CD4-positive, alpha-beta memory T cell (primary cell): ENCODE measurements at regions of chr15 and their contacts with region 1.

Region 1: GRCh38 chr15:42704492-42704926 is 32.4 kb downstream of the CDAN1 start:
- DNase-seq: peak; percentile 54 to 60 (median 55)
- H3K4me3 ChIP-seq: no peak overlapping the region
- H3K4me3 Mint-ChIP-seq: no peak overlapping the region
- H3K27ac ChIP-seq: no peak overlapping the region
- H3K27ac Mint-ChIP-seq: no peak overlapping the region
- H3K4me1 ChIP-seq: no peaks in the 10 kb centered on the region
- H3K4me1 Mint-ChIP-seq: peaks cover 0 to 5% (median 0%) of the 10 kb centered on the region in 4 donors
- H3K27me3 ChIP-seq: no peaks in the 10 kb centered on the region
- H3K27me3 Mint-ChIP-seq: no peaks in the 10 kb centered on the region

Region 2: GRCh38 chr15:42929306-42929848 is 224.9 kb after region 1 on chr15:
- CTCF ChIA-PET with region 1: interaction called, 80 read pairs
- POLR2A ChIA-PET with region 1: interaction called, 3 read pairs
- intact Hi-C with region 1: loop called (anchors 1 kb)
- DNase-seq: no peak
- H3K4me3 ChIP-seq: no peak overlapping the region
- H3K4me3 Mint-ChIP-seq: no peak overlapping the region
- H3K27ac ChIP-seq: no peak overlapping the region
- H3K27ac Mint-ChIP-seq: no peak overlapping the region
- H3K4me1 ChIP-seq: no peaks in the 10 kb centered on the region
- H3K4me1 Mint-ChIP-seq: peaks cover 0 to 2% (median 0%) of the 10 kb centered on the region in 4 donors
- H3K27me3 ChIP-seq: no peaks in the 10 kb centered on the region
- H3K27me3 Mint-ChIP-seq: no peaks in the 10 kb centered on the region

Region 3: DNA sequence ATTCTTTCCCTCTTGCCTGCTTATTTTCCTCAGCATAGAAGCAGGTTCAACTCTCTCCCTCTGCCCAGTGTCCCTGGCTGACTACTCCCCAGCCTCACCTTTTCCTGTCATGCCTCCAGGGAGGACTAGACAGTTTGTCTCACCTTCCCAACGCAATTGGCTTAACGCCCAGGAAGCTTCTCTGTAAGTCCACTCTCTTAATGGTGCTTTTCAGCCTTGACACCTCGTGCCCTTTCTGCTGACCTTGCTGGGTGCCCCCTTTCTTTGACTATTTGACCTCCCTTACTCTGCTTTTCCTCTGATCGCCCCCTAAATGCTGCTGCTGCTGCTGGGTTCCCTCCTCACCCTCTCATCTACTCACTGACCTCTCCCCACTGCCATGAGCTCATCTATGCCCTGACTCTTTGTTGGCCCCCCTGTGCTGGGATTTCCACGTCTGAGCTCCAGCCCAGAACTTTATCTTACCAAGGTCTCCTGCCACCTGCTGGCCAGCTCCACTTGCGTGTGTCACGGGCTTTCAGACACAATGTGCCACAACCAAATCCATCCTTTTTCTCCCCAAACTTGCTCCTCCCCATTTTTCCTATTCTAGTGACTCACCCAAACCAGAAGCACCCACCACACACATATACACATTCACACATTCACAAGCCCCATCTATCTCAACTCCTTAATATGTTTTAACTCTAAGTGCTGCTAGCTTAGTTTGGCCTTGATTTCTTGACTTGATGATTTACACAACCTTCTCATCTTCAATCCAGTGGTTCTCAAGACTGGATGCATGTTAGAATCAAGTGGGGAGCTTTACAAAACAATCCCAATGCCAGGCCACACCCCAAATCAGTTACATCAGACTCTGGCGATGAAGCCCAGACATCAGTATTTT is 499.8 kb after region 1 on chr15:
- CTCF ChIA-PET with region 1: interaction called, 12 read pairs
- POLR2A ChIA-PET with region 1: no interaction called
- intact Hi-C with region 1: no loop called
- DNase-seq: peak; percentile 24 to 54 (median 34)
- H3K4me3 ChIP-seq: no peak overlapping the region
- H3K4me3 Mint-ChIP-seq: no peak overlapping the region
- H3K27ac ChIP-seq: no peak overlapping the region
- H3K27ac Mint-ChIP-seq: peak overlapping the region in 4 of 7 donors; percentile 1 to 53 (median 18)
- H3K4me1 ChIP-seq: no peaks in the 10 kb centered on the region
- H3K4me1 Mint-ChIP-seq: peaks cover 0 to 6% (median 3%) of the 10 kb centered on the region in 4 donors
- H3K27me3 ChIP-seq: no peaks in the 10 kb centered on the region
- H3K27me3 Mint-ChIP-seq: peaks cover 5 to 7% of the 10 kb centered on the region in 2 donors